Activated naive CD4-positive, alpha-beta T cell treated with anti-CD3 and anti-CD28 coated beads for 36 hours (primary cell): ENCODE measurements at regions of chr1 and their contacts with region 1.

Region 1: DNA sequence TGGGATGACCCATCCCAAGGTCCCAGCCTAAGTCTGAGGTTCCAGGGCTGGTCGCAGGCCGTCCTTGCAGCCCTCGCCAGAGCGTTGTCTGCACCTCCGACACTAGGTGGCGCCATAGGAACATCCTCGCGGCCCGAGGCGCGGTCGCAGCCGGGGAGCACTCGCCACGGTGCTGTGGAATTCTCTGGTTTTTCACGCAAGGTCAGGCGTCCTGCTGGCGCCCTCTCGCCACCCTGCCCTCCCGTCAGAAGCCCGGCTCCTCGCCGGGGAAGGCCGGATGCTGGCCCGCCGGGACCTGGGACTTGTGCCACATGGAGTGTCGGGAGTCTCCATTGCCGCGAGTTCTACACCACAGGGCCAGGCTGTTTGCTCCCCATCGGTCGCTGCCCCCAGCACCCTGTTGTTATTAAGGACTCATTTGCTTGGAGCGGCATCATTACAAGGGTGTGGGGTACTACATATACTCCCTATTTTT is 196.8 kb upstream of the LMO4 start:
- DNase-seq: peak; percentile 81
- H3K4me3 Mint-ChIP-seq: peak overlapping the region; percentile 69
- H3K27ac Mint-ChIP-seq: no peak overlapping the region
- H3K4me1 Mint-ChIP-seq: peaks cover 7% of the 10 kb centered on the region
- H3K27me3 Mint-ChIP-seq: peaks cover 40% of the 10 kb centered on the region

Region 2: DNA sequence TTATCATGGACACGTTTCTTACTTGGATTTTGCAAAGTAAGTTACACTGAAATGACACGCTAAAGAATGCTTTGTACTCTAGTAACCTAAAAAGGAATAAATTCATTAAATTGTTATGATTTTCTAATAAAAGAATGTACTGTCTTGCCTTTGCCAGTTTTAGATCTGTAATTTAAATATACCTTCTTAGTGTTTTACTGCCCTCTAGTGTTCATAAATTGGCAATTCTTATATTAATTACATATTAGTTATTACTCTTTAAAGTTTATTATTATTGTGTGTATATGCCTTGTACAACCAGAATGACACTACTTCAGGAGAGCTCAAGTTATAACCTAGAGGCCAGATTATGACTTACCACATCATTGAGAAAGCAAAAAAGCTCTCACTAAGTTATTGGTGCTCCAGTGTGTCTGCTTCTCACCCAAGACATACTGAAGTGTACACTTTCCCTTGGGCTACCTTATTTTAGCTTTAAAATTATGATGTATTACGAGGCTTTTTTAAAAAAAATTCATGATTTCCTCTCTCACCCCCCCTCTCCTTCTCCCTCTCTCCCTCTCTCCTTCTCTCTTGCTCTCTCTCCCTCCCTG is 47.5 kb before region 1 on chr1:
- CTCF ChIA-PET with region 1: no interaction called
- intact Hi-C with region 1: no loop called
- DNase-seq: no peak
- H3K4me3 Mint-ChIP-seq: no peak overlapping the region
- H3K27ac Mint-ChIP-seq: no peak overlapping the region
- H3K4me1 Mint-ChIP-seq: peaks cover 8% of the 10 kb centered on the region
- H3K27me3 Mint-ChIP-seq: no peaks in the 10 kb centered on the region

Region 3: DNA sequence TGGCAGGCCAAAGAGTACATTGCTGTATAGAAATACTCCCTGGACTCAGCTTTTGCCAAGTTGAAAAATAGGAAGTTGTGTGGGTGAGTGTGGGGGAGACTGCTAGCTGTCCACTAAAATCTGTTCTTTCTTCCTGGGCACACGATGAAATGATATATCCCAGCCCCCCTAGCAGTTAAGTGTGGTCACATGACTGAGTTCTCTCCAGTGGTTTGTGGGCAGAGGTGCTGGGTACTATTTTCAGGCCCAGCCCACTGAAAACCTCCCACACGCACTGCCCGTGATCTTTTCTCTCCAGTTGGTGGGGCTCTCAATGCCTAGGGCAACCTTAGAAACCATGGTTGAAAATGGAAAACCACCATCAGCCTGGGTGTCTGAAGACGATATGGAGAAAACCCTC is 77.1 kb after region 1 on chr1:
- CTCF ChIA-PET with region 1: no interaction called
- intact Hi-C with region 1: no loop called
- DNase-seq: no peak
- H3K4me3 Mint-ChIP-seq: no peak overlapping the region
- H3K27ac Mint-ChIP-seq: no peak overlapping the region
- H3K4me1 Mint-ChIP-seq: no peaks in the 10 kb centered on the region
- H3K27me3 Mint-ChIP-seq: peaks cover 23% of the 10 kb centered on the region

Region 4: DNA sequence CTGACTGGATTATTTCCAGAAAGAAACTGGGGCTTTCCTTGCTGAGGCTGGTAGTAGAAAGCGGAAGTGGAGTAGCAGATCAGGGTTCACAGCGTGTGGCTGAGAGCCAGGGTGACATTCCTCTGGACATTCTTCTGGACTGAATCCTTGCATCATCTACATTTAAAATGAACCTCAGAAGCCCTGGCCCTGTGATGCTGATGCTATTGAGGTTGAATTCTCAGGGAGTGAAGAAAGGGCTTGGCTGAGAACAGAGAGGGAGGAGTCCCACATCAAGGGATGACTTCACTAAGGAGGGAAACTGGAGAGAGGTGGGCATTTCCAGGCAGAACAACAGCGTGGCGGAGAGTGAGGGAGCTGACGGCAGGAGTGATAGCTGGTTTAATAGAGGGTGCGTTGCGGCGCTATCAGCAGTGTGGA is 94.5 kb after region 1 on chr1:
- CTCF ChIA-PET with region 1: no interaction called
- intact Hi-C with region 1: no loop called
- DNase-seq: no peak
- H3K4me3 Mint-ChIP-seq: no peak overlapping the region
- H3K27ac Mint-ChIP-seq: no peak overlapping the region
- H3K4me1 Mint-ChIP-seq: no peaks in the 10 kb centered on the region
- H3K27me3 Mint-ChIP-seq: peaks cover 2% of the 10 kb centered on the region

Region 5: GRCh38 chr1:87953732-87954344 is 822.0 kb after region 1 on chr1:
- CTCF ChIA-PET with region 1: no interaction called
- intact Hi-C with region 1: loop called (anchors 1 kb)
- DNase-seq: peak; percentile 62
- H3K4me3 Mint-ChIP-seq: no peak overlapping the region
- H3K27ac Mint-ChIP-seq: no peak overlapping the region
- H3K4me1 Mint-ChIP-seq: no peaks in the 10 kb centered on the region
- H3K27me3 Mint-ChIP-seq: peaks cover 20% of the 10 kb centered on the region

Region 6: GRCh38 chr1:88191917-88192316 is 1060.1 kb after region 1 on chr1:
- CTCF ChIA-PET with region 1: no interaction called
- intact Hi-C with region 1: no loop called
- DNase-seq: no peak
- H3K4me3 Mint-ChIP-seq: no peak overlapping the region
- H3K27ac Mint-ChIP-seq: no peak overlapping the region
- H3K4me1 Mint-ChIP-seq: peaks cover 3% of the 10 kb centered on the region
- H3K27me3 Mint-ChIP-seq: peaks cover 1% of the 10 kb centered on the region